Naive thymus-derived CD4-positive, alpha-beta T cell (primary cell): ENCODE measurements at regions of chr11 and their contacts with region 1.

Region 1: GRCh38 chr11:46121724-46122477 is 647 bp upstream of the PHF21A start:
- DNase-seq: peak in 7 of 9 donors; percentile 20 to 85 (median 80)
- ATAC-seq: peak; percentile 69
- H3K4me3 ChIP-seq: peak overlapping the region; percentile 53
- H3K4me3 Mint-ChIP-seq: peak overlapping the region; percentile 83 to 95 (median 93)
- H3K27ac ChIP-seq: peak overlapping the region; percentile 80
- H3K27ac Mint-ChIP-seq: peak overlapping the region; percentile 87 to 98 (median 95)
- H3K4me1 ChIP-seq: peaks cover 18 to 22% of the 10 kb centered on the region in 2 donors
- H3K4me1 Mint-ChIP-seq: peaks cover 24 to 39% (median 35%) of the 10 kb centered on the region in 7 donors
- H3K27me3 ChIP-seq: no peaks in the 10 kb centered on the region
- H3K27me3 Mint-ChIP-seq: no peaks in the 10 kb centered on the region

Region 2: GRCh38 chr11:45771566-45772448 is 350.1 kb before region 1 on chr11:
- CTCF ChIA-PET with region 1: no interaction called
- POLR2A ChIA-PET with region 1: no interaction called
- intact Hi-C with region 1: loop called in 1 of 2 experiments (anchors 10 kb)
- DNase-seq: peak; percentile 57 to 86 (median 70)
- ATAC-seq: peak; percentile 91
- H3K4me3 ChIP-seq: peak overlapping the region; percentile 83
- H3K4me3 Mint-ChIP-seq: peak overlapping the region; percentile 85 to 99 (median 92)
- H3K27ac ChIP-seq: peak overlapping the region; percentile 54
- H3K27ac Mint-ChIP-seq: peak overlapping the region; percentile 26 to 84 (median 72)
- H3K4me1 ChIP-seq: peaks cover 7 to 15% of the 10 kb centered on the region in 2 donors
- H3K4me1 Mint-ChIP-seq: peaks cover 6 to 16% (median 12%) of the 10 kb centered on the region in 7 donors
- H3K27me3 ChIP-seq: no peaks in the 10 kb centered on the region
- H3K27me3 Mint-ChIP-seq: peaks cover 0 to 5% (median 0%) of the 10 kb centered on the region in 5 donors

Region 3: DNA sequence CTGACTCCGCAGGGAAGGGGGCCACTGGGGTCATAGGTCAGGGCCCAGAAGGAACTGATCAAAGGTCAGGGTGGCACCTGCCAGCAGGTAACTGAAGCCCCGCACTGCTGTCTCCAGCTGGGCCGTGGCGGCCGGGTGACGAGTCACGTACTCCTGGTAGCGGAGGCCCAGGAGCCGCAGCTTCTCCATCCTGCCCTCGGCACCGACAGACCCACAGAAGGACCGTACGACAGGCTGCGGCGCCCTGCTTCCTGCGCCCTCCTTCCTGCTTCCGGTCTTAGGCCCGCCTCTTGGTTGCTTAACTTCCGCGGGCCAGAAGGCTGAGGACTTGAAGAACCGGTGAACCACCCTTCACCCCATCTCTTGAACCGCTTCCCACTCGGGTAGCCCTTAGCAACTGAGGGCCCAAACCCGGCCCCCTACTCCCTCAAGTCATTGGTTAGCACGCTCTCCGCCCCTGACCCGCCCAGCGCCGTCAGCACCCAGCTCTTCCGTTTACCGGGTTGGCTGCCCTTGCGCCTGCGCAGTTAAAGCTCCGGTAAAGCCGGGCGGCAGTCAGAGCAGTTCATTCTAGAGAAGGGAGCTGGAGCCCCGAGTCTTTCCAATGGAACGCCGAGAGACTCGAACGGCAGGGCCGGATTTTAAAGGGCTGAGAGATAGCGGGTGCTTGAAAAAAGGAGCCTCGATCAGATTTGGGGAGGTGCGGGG is 204.1 kb before region 1 on chr11 and contains the start of gene PEX16:
- CTCF ChIA-PET with region 1: no interaction called
- POLR2A ChIA-PET with region 1: no interaction called
- intact Hi-C with region 1: loop called (anchors 1 to 2 kb)
- DNase-seq: peak; percentile 86 to 98 (median 97)
- ATAC-seq: peak; percentile 95
- H3K4me3 ChIP-seq: peak within 1 kb of the TSS; percentile 72
- H3K4me3 Mint-ChIP-seq: peak within 1 kb of the TSS; percentile 86 to 98 (median 96)
- H3K27ac ChIP-seq: peak within 1 kb of the TSS; percentile 87
- H3K27ac Mint-ChIP-seq: peak within 1 kb of the TSS; percentile 91 to 100 (median 98)
- H3K4me1 ChIP-seq: peaks cover 24 to 36% of the 10 kb centered on the region in 2 donors
- H3K4me1 Mint-ChIP-seq: peaks cover 31 to 66% (median 49%) of the 10 kb centered on the region in 7 donors
- H3K27me3 ChIP-seq: no peaks in the 10 kb centered on the region
- H3K27me3 Mint-ChIP-seq: peaks cover 0 to 13% (median 4%) of the 10 kb centered on the region in 5 donors
- total RNA-seq, gene PEX16: 48.2 to 64.3 (median 58.1) TPM

Region 4: DNA sequence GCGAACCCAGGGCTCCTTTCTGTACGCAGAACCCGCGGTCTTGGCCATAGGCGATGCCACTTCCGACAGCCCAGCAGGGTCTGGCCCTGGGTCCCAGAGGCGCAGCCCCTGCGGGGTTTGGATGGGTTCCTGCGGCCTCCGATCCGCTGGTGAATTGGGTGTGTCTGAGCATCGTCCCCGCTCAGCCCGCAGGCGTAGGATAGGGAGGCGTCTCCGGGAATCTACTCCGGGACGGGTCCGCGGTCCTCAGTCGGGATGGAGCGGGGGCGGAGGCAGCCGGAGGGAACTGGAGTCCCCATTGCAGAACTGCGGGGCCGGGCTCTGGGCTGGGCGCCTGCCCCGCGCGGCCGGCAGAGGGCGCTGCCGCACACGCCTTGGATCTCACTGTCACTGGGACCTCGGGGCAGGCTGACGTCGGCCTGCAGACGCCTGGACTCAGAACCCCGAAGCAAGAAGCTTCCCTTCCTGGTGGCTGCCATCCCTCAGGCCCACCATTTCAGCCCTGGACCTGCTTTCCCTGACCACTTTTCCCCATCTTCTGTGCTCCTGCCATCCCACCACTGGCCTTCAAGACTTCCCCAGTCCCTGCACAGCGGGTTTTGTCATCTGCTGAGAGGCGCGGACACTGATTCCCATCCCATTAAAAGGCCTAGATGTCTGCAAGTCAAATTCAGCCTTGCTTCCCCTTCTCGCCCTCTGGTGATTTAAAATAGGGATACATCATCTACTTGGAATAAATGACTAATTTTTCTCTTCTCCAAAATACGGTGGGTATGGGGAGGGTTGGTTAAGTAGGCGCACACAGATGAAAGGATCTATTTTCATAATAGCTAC is 117.3 kb after region 1 on chr11:
- CTCF ChIA-PET with region 1: interaction called, 3 read pairs
- POLR2A ChIA-PET with region 1: no interaction called
- intact Hi-C with region 1: loop called (anchors 2 kb)
- DNase-seq: peak; percentile 62 to 89 (median 78)
- ATAC-seq: peak; percentile 86
- H3K4me3 ChIP-seq: peak overlapping the region; percentile 55
- H3K4me3 Mint-ChIP-seq: peak overlapping the region in 9 of 10 donors; percentile 32 to 79 (median 74)
- H3K27ac ChIP-seq: no peak overlapping the region
- H3K27ac Mint-ChIP-seq: peak overlapping the region in 1 of 9 donors; percentile 43
- H3K4me1 ChIP-seq: peaks cover 12 to 20% of the 10 kb centered on the region in 2 donors
- H3K4me1 Mint-ChIP-seq: peaks cover 18 to 46% (median 31%) of the 10 kb centered on the region in 7 donors
- H3K27me3 ChIP-seq: peaks cover 0 to 4% of the 10 kb centered on the region in 2 donors
- H3K27me3 Mint-ChIP-seq: peaks cover 14 to 28% (median 19%) of the 10 kb centered on the region in 5 donors

Region 5: GRCh38 chr11:46537537-46538295 is 415.8 kb after region 1 on chr11:
- CTCF ChIA-PET with region 1: no interaction called
- POLR2A ChIA-PET with region 1: no interaction called
- intact Hi-C with region 1: loop called in 1 of 2 experiments (anchors 1 kb)
- DNase-seq: peak in 8 of 9 donors; percentile 33 to 75 (median 66)
- ATAC-seq: peak; percentile 88
- H3K4me3 ChIP-seq: no peak overlapping the region
- H3K4me3 Mint-ChIP-seq: no peak overlapping the region
- H3K27ac ChIP-seq: no peak overlapping the region
- H3K27ac Mint-ChIP-seq: peak overlapping the region in 4 of 9 donors; percentile 2 to 38 (median 16)
- H3K4me1 ChIP-seq: peaks cover 0 to 3% of the 10 kb centered on the region in 2 donors
- H3K4me1 Mint-ChIP-seq: peaks cover 14 to 58% (median 39%) of the 10 kb centered on the region in 7 donors
- H3K27me3 ChIP-seq: no peaks in the 10 kb centered on the region
- H3K27me3 Mint-ChIP-seq: no peaks in the 10 kb centered on the region